AG04449 (cell line): ENCODE measurements at regions of chr22 and their contacts with region 1.

Region 1: GRCh38 chr22:30763815-30764686 is 69.4 kb downstream of the OSBP2 start:
- DNase-seq: peak; percentile 45
- H3K4me3 ChIP-seq: no peak overlapping the region
- CTCF ChIP-seq: peak; percentile 71

Region 2: DNA sequence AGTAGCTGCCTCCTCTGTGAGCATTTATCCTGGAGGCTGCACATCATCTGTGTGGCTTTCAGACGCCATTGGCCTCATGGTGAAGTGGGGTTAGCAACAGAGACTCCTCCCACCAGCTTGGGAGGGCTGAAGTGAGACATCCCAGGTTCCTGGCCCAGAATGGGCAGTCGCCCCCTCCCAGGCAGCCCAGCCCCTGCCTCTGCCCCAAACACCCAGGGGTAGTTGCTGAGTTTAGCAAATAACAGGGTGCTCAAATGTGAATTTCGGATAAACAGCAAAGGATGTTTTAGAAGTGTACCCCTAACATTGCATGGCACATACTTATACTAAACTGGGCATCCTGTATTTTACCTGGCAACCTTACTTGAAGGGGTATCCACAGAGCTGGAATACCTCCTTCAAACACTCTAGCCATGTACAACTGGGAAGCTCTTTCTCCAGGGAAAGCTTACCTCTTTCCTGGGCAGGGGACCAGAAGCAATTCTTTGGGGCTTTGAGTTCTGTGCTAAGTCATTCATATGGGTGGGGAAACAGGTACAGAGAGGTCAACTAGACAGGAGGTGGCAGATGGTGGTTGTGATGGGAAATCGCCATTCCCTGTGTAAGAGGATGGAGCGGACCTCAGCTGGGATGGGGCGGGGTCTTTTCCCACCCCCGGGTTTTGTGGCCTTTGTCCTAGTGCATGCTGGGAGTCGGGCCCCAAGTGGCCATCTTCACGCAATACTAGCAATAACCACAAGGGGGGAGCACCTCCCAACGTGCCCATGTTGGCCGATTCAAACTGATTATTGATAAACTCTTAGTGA is 319.2 kb before region 1 on chr22:
- CTCF ChIA-PET with region 1: no interaction called
- POLR2A ChIA-PET with region 1: no interaction called
- DNase-seq: no peak
- H3K4me3 ChIP-seq: no peak overlapping the region
- CTCF ChIP-seq: peak; percentile 75

Region 3: GRCh38 chr22:30742291-30743256 is 21.5 kb before region 1 on chr22:
- CTCF ChIA-PET with region 1: interaction called, 11 read pairs
- POLR2A ChIA-PET with region 1: no interaction called
- DNase-seq: no peak
- H3K4me3 ChIP-seq: no peak overlapping the region
- CTCF ChIP-seq: no peak

Region 4: GRCh38 chr22:30777587-30777986 is 13.5 kb after region 1 on chr22:
- CTCF ChIA-PET with region 1: interaction called, 12 read pairs
- POLR2A ChIA-PET with region 1: no interaction called
- DNase-seq: no peak
- H3K4me3 ChIP-seq: no peak overlapping the region
- CTCF ChIP-seq: no peak

Region 5: DNA sequence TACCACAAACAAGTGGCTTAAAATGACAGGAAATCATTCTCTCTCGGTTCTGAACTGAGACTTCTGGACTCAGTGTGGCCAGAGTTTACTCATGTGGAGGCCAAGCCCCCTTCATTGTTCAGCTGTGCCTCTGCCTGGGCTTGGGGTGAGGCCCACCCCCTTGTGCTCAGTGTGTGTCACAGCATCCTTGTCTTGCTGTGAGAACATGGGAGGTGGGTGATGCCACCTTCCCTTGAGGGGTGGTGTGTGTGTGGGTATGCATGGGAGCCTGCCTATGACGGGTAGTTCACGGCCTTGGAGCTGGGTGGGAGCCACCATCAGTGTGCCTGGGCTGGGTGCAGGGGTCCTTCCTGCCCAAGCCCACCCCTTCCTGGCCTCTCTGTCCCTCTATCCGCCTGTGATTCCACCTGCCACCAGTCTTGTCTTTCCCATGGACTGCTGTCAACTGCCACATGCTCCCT is 102.8 kb after region 1 on chr22:
- CTCF ChIA-PET with region 1: no interaction called
- POLR2A ChIA-PET with region 1: no interaction called
- DNase-seq: no peak
- H3K4me3 ChIP-seq: no peak overlapping the region
- CTCF ChIP-seq: no peak

Region 6: GRCh38 chr22:30890686-30891442 is 126.8 kb after region 1 on chr22:
- CTCF ChIA-PET with region 1: interaction called, 81 read pairs
- POLR2A ChIA-PET with region 1: no interaction called
- DNase-seq: no peak
- H3K4me3 ChIP-seq: no peak overlapping the region
- CTCF ChIP-seq: peak; percentile 84

Region 7: GRCh38 chr22:30905696-30906341 is 141.8 kb after region 1 on chr22:
- CTCF ChIA-PET with region 1: interaction called, 60 read pairs
- POLR2A ChIA-PET with region 1: no interaction called
- DNase-seq: no peak
- H3K4me3 ChIP-seq: no peak overlapping the region
- CTCF ChIP-seq: no peak

Region 8: GRCh38 chr22:30947816-30948454 is 183.9 kb after region 1 on chr22:
- CTCF ChIA-PET with region 1: interaction called, 11 read pairs
- POLR2A ChIA-PET with region 1: no interaction called
- DNase-seq: peak; percentile 16
- H3K4me3 ChIP-seq: no peak overlapping the region
- CTCF ChIP-seq: peak; percentile 40